ENCODE measurements at regions of chr7 and their contacts with region 1.

Region 1: DNA sequence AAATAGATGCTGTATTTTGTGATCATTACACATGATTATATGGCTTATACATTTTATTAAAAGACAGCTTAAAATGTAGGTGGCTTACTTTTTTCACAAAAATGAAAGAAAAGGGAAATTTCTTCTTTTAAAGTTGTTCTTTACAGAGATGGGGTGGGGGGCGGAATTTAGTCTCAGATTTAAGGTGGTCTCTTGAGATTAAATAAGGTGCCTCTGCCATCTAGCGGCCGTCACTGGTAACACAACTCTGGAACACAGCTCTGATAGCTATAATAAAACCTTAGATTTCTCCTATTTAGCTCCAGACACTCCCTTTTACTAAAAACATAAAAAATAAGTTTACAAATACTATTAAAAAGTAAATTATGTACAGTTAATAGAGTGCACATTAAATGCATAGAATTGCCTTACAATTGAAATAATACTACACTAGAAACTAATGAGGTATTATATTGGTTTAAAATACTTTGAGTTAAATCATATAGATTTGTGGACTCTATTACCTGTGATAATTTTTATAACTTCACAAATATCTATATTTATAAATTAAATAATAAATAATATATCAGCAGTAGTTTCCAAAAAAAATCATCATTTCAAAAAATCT is 210.9 kb downstream of the DGKB start:
- DNase-seq: peak; percentile 76
- ATAC-seq: no peak
- H3K4me3 Mint-ChIP-seq: no peak overlapping the region
- H3K27ac Mint-ChIP-seq: no peak overlapping the region
- H3K4me1 Mint-ChIP-seq: no peaks in the 10 kb centered on the region
- H3K27me3 Mint-ChIP-seq: peaks cover 1% of the 10 kb centered on the region
- CTCF ChIP-seq: peak; percentile 93

Region 2: GRCh38 chr7:13279854-13280435 is 1411.8 kb before region 1 on chr7:
- CTCF ChIA-PET with region 1: interaction called, 19 read pairs
- POLR2A ChIA-PET with region 1: no interaction called
- intact Hi-C with region 1: loop called (anchors 5 kb)
- DNase-seq: no peak
- ATAC-seq: no peak
- H3K4me3 Mint-ChIP-seq: no peak overlapping the region
- H3K27ac Mint-ChIP-seq: no peak overlapping the region
- H3K4me1 Mint-ChIP-seq: no peaks in the 10 kb centered on the region
- H3K27me3 Mint-ChIP-seq: peaks cover 4% of the 10 kb centered on the region
- CTCF ChIP-seq: peak; percentile 63

Region 3: DNA sequence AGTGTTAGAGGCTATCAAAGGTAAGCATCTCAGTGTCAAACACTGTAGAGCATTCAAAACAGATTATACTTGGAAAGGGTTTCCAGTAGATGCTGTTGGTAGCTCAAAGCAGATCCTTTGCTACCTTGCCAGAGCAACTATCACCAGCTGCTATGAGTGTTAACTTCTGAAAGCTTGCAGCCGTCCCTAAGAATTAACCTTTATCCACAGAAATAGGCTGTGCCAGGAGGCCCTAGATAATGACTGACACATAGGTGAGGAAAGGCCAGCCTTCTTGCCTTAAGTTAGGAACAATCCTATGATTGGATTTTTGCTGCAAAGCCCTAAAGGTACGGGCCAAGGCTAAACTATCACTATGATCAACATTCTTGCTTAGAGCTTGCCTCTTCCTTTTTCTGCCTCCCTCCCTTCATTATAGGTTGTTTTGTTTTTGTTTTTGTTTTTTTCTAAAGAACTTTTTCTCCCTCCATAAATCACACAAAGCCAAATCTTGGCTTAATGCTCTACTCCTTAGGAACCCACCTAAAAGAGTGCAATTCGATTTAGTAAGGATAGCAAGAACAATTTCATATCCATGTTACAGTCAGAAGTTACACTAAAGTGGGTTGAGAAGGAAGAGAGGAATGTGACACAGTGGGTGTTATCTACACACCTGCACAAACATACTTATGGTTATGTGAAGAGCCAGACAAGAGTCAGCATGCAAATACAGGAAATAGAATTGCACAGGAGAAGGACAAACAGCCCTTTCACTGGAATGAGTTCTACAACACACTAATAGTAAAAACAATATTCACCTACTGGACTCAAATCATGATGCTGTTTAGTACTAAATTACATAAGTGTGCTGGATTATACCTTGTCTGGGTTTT is 52.1 kb before region 1 on chr7:
- CTCF ChIA-PET with region 1: no interaction called
- POLR2A ChIA-PET with region 1: no interaction called
- intact Hi-C with region 1: no loop called
- DNase-seq: no peak
- ATAC-seq: no peak
- H3K4me3 Mint-ChIP-seq: no peak overlapping the region
- H3K27ac Mint-ChIP-seq: no peak overlapping the region
- H3K4me1 Mint-ChIP-seq: no peaks in the 10 kb centered on the region
- H3K27me3 Mint-ChIP-seq: no peaks in the 10 kb centered on the region
- CTCF ChIP-seq: no peak

Region 4: GRCh38 chr7:14666304-14666703 is 25.4 kb before region 1 on chr7:
- CTCF ChIA-PET with region 1: interaction called, 14 read pairs
- POLR2A ChIA-PET with region 1: interaction called, 4 read pairs
- intact Hi-C with region 1: no loop called
- DNase-seq: no peak
- ATAC-seq: no peak
- H3K4me3 Mint-ChIP-seq: no peak overlapping the region
- H3K27ac Mint-ChIP-seq: no peak overlapping the region
- H3K4me1 Mint-ChIP-seq: no peaks in the 10 kb centered on the region
- H3K27me3 Mint-ChIP-seq: no peaks in the 10 kb centered on the region
- CTCF ChIP-seq: no peak

Region 5: GRCh38 chr7:14673202-14673601 is 18.5 kb before region 1 on chr7:
- CTCF ChIA-PET with region 1: interaction called, 14 read pairs
- POLR2A ChIA-PET with region 1: no interaction called
- intact Hi-C with region 1: no loop called
- DNase-seq: no peak
- ATAC-seq: no peak
- H3K4me3 Mint-ChIP-seq: no peak overlapping the region
- H3K27ac Mint-ChIP-seq: no peak overlapping the region
- H3K4me1 Mint-ChIP-seq: no peaks in the 10 kb centered on the region
- H3K27me3 Mint-ChIP-seq: peaks cover under 1% of the 10 kb centered on the region
- CTCF ChIP-seq: no peak

Region 6: GRCh38 chr7:14836571-14837189 is 145.0 kb after region 1 on chr7:
- CTCF ChIA-PET with region 1: no interaction called
- POLR2A ChIA-PET with region 1: no interaction called
- intact Hi-C with region 1: no loop called
- DNase-seq: no peak
- ATAC-seq: no peak
- H3K4me3 Mint-ChIP-seq: no peak overlapping the region
- H3K27ac Mint-ChIP-seq: no peak overlapping the region
- H3K4me1 Mint-ChIP-seq: no peaks in the 10 kb centered on the region
- H3K27me3 Mint-ChIP-seq: no peaks in the 10 kb centered on the region
- CTCF ChIP-seq: no peak